IMR-90 (cell line): ENCODE measurements at regions of chr10 and their contacts with region 1.

Region 1: DNA sequence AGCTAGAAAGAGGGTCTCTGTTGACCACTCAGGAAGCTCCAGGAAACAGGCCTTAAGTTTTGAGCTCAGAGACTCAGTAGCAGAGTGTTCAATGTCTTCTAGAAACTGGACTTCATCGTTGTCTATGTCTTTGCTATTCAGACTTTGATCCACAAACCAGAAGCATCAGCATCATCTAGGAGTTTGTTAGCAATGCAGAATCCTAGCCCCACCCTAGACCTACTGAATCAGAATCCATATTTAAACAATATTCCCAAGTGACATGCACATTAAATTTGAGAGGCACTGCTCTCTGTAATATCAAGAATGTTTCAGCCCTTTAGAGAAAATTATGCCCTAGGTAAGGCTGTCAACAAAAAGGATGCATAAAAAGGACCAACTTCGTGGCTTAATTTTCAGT is 12.9 kb upstream of the OGDHL start:
- DNase-seq: no peak
- ATAC-seq: no peak
- H3K4me3 ChIP-seq: no peak overlapping the region
- H3K27ac ChIP-seq: no peak overlapping the region
- H3K4me1 ChIP-seq: no peaks in the 10 kb centered on the region
- H3K27me3 ChIP-seq: peaks cover 11% of the 10 kb centered on the region
- CTCF ChIP-seq: no peak
- POLR2A ChIP-seq: no peak
- RAD21 ChIP-seq: no peak

Region 2: GRCh38 chr10:49398000-49398861 is 376.8 kb before region 1 on chr10:
- CTCF ChIA-PET with region 1: no interaction called
- POLR2A ChIA-PET with region 1: no interaction called
- dilution Hi-C with region 1: no loop called
- in situ Hi-C with region 1: no loop called
- intact Hi-C with region 1: no loop called
- DNase-seq: peak; percentile 28
- ATAC-seq: peak; percentile 97
- H3K4me3 ChIP-seq: 0 out of 2 replicates have a peak overlapping the region, but pooled peaks have one; percentile 9
- H3K27ac ChIP-seq: no peak overlapping the region
- H3K4me1 ChIP-seq: no peaks in the 10 kb centered on the region
- H3K27me3 ChIP-seq: peaks cover 73% of the 10 kb centered on the region
- CTCF ChIP-seq: no peak
- POLR2A ChIP-seq: no peak
- RAD21 ChIP-seq: no peak

Region 3: GRCh38 chr10:49552249-49552672 is 222.8 kb before region 1 on chr10:
- CTCF ChIA-PET with region 1: no interaction called
- POLR2A ChIA-PET with region 1: no interaction called
- dilution Hi-C with region 1: no loop called
- in situ Hi-C with region 1: no loop called
- intact Hi-C with region 1: no loop called
- DNase-seq: peak; percentile 81
- ATAC-seq: peak; percentile 89
- H3K4me3 ChIP-seq: no peak overlapping the region
- H3K27ac ChIP-seq: no peak overlapping the region
- H3K4me1 ChIP-seq: peaks cover 7% of the 10 kb centered on the region; the same call in 1 of the 2 replicates
- H3K27me3 ChIP-seq: no peaks in the 10 kb centered on the region
- CTCF ChIP-seq: no peak
- POLR2A ChIP-seq: no peak
- RAD21 ChIP-seq: no peak

Region 4: DNA sequence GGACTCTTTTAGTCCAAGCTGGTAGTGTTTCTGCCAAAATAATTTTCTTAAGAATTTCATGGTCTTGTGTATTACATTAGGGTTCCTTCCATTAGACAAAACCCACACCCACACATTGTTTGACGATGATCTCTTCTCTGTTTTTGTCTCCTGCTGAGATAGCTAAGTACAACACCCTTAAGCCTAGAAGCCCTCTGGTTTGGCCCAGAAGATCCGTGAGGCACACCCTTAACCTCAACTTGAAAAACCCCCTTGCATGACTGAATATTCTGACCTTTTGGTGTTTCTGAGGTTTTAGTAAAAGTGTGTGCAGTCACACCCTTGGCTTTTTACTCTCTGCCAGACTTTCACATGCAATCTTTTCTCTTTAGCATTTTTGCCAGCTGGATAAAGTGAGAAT is 206.8 kb before region 1 on chr10:
- CTCF ChIA-PET with region 1: no interaction called
- POLR2A ChIA-PET with region 1: no interaction called
- dilution Hi-C with region 1: no loop called
- in situ Hi-C with region 1: no loop called
- intact Hi-C with region 1: no loop called
- DNase-seq: peak; percentile 11
- ATAC-seq: no peak
- H3K4me3 ChIP-seq: no peak overlapping the region
- H3K27ac ChIP-seq: no peak overlapping the region
- H3K4me1 ChIP-seq: no peaks in the 10 kb centered on the region; the same call in 1 of the 2 replicates
- H3K27me3 ChIP-seq: peaks cover 2% of the 10 kb centered on the region; the same call in 1 of the 2 replicates
- CTCF ChIP-seq: no peak
- POLR2A ChIP-seq: no peak
- RAD21 ChIP-seq: no peak

Region 5: DNA sequence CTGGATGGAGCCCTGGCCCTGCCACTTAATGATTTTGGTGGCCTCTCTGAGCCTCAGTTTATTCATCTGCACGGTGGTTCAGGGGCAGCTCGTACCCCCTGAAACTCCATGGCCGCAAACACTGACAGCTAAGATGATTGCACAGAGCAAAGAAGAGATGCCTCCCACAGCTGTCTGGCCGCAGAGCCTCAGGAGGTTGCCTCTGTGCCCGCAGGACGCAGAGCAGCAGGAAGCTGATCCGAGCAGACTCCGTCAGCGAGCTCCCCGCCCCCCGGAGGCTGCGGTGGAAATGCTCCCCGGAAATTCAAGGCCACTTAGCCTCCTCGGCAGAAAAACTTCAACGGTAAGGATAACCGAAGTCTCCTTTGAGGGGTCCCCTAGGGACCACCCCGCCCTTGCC is 125.7 kb before region 1 on chr10:
- CTCF ChIA-PET with region 1: no interaction called
- POLR2A ChIA-PET with region 1: interaction called, 26 read pairs
- dilution Hi-C with region 1: no loop called
- in situ Hi-C with region 1: no loop called
- intact Hi-C with region 1: no loop called
- DNase-seq: no peak
- ATAC-seq: peak; percentile 48
- H3K4me3 ChIP-seq: no peak overlapping the region
- H3K27ac ChIP-seq: no peak overlapping the region
- H3K4me1 ChIP-seq: no peaks in the 10 kb centered on the region
- H3K27me3 ChIP-seq: peaks cover 11% of the 10 kb centered on the region
- CTCF ChIP-seq: no peak
- POLR2A ChIP-seq: no peak
- RAD21 ChIP-seq: no peak